Esophagus muscularis mucosa (tissue), 4 donors: ENCODE measurements at regions of chr1 and their contacts with region 1.

Region 1: DNA sequence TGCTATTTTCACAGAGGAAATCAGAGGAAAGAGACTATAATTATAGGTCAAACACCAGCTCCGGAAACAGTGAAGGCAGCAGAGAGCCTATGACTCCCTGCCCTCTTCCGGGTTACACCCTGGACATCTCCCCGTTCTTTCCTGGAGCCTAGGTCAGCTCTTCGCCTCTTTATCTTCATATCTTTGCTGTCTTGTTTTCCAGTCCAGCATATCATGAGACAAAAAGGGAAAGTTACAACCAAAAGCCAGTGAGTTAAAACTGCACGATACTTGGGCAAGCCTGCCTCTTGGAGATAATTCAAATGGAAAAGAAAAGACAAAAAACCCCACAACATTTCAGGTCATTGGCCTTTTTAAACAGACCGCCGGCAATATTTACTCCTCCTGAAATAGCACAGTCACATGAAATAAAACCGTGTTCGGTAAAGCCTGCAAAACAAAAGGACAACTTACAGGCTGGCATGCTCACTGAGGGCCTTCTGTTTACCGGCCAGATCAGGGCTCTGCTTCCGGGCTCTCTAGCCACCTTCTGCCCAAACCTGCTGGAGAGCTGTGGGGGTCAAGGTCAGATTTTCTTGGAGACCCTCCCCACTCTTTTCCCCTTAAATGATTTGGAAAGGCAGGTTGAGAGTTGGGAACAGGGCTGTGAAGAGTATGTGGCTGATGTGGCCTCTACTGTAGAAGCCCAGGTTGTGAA is 42.8 kb upstream of the PPP2R5A start:
- DNase-seq: no peak
- H3K4me3 ChIP-seq: peak overlapping the region in 1 of 4 donors; percentile 0
- H3K27ac ChIP-seq: peak overlapping the region; percentile 63 to 78 (median 72)
- H3K4me1 ChIP-seq: peaks cover 29 to 72% (median 61%) of the 10 kb centered on the region in 4 donors
- H3K27me3 ChIP-seq: no peaks in the 10 kb centered on the region
- CTCF ChIP-seq: no peak
- EP300 ChIP-seq: no peak
- POLR2A ChIP-seq: no peak

Region 2: DNA sequence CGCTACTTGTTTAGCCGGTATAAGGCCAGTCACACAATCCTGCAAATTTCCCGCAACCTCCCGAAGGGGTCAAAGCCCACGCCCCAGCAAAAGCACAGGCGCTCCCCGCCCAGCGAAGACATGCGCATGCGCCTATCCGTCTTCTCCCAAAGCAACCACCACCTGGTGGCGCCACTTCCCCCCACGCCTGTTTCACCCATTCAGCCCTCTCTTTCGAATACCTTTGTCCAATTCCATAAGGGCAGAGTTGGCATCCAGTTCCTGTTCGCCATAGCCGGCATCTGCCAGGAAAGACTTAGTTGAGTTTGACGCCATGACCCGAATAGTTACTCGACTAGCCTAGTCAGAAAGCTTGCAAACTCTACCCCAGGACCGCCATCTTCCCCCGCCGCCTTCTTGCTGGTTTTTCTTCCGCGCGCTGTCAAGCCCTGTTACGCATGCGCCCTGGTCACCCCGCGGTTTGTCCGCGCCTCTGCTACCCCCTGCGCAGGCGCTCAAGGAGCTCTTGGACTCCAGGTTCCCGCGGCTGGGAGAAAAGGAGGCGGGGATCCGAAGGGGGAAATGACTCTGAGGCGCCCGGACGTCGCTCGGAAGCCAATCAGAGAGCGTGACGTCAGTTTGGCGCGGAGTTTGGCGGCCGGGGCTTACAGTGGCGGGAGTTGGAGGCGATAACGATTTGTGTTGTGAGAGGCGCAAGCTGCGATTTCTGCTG is 207.2 kb before region 1 on chr1 and contains the starts of genes DTL and INTS7:
- intact Hi-C with region 1: no loop called
- DNase-seq: peak; percentile 99
- H3K4me3 ChIP-seq: peak within 1 kb of the TSS; percentile 61 to 78 (median 68)
- H3K27ac ChIP-seq: peak within 1 kb of the TSS; percentile 84 to 88 (median 86)
- H3K4me1 ChIP-seq: peaks cover 18 to 42% (median 30%) of the 10 kb centered on the region in 4 donors
- H3K27me3 ChIP-seq: no peaks in the 10 kb centered on the region
- CTCF ChIP-seq: peak; percentile 87 to 93 (median 89)
- EP300 ChIP-seq: no peak
- POLR2A ChIP-seq: no peak
- total RNA-seq, gene DTL: 0.06 to 0.17 (median 0.17) TPM in 3 of 4 donors, not detected in the other
- total RNA-seq, gene INTS7: 6.0 to 15.4 (median 11.0) TPM

Region 3: DNA sequence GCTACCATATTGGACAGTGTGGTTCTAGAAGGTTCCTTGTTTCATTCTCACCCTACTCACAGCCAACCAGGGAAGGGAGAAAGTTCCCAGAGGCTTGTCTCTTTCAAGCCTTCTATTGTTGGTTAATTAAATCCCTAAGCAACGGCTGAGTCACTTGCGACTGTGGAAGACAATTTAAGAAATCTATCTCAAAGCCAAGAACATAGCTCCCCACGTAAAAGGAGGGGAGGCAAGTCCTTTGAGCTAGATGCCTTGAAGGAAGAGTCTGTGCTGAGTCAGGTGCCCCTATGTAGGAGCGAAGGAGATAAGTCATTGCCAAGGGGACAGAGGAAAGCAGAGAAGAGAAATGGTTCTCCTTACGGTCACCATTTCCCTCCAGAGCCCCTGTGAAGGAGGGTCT is 36.6 kb before region 1 on chr1:
- intact Hi-C with region 1: no loop called
- DNase-seq: no peak
- H3K4me3 ChIP-seq: no peak overlapping the region
- H3K27ac ChIP-seq: no peak overlapping the region
- H3K4me1 ChIP-seq: no peaks in the 10 kb centered on the region
- H3K27me3 ChIP-seq: no peaks in the 10 kb centered on the region
- CTCF ChIP-seq: no peak
- EP300 ChIP-seq: no peak
- POLR2A ChIP-seq: no peak

Region 4: DNA sequence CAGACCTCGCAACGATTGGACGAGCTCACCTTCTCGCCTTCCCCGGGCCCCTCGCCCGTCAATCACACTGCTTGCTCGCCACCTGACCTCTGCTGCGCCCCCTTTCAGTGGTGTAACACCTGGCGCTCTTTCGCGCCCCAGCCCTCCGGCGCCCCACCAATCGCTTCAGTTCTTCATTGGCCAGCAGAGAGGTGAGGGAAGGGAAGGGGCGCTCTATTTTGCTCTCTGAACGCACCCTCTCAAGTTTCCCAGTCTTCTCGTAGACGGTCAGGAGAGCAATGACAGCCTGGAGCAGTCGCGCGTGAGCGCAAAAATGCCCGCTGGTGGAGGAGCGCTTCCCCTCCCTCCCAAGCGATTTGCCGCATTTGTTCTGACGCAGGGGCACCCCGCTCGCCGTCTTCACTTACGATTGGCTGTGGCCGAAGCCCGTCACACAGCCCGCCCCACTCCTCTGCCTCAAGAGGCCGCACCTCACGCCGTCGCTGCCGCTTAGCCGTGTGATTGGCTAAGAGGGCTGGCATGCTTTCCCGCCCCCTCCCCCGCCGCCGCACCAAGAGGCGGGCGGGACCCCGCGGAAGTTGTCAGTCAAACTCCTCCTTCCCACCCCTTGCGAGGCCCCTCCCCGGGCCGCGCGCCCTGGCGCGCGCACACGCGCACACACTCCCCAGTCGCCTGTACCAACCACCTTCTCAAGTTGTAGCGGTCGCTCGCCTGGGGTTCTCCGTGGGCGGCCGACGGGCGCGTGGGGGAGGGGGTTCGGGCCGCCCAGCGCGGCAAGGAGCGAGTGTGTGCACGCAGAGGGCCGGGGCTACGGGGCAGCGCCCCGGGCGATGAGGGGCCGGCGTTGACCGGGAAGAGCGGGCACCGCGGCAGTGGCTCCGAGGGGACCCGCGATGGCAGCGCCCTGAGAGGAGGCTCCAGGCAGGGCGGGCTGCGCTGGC is 42.6 kb after region 1 on chr1 and contains the start of gene PPP2R5A:
- intact Hi-C with region 1: loop called (anchors 5 kb)
- DNase-seq: peak; percentile 100
- H3K4me3 ChIP-seq: peak within 1 kb of the TSS; percentile 78 to 95 (median 92)
- H3K27ac ChIP-seq: peak within 1 kb of the TSS; percentile 94 to 100 (median 99)
- H3K4me1 ChIP-seq: peaks cover 30 to 38% (median 34%) of the 10 kb centered on the region in 4 donors
- H3K27me3 ChIP-seq: no peaks in the 10 kb centered on the region
- CTCF ChIP-seq: peak in 2 of 3 experiments; percentile 21 to 22
- EP300 ChIP-seq: no peak
- POLR2A ChIP-seq: peak; percentile 90
- total RNA-seq, gene PPP2R5A: 57.0 to 63.5 (median 58.9) TPM